B cell (primary cell): ENCODE measurements at regions of chr16 and their contacts with region 1.

Region 1: GRCh38 chr16:788394-789126 is at the start of gene CHTF18:
- DNase-seq: peak; percentile 94
- ATAC-seq: peak; percentile 97
- H3K4me3 ChIP-seq: peak within 1 kb of the TSS; percentile 15 to 86 (median 81)
- H3K4me3 Mint-ChIP-seq: peak within 1 kb of the TSS; percentile 86
- H3K27ac ChIP-seq: peak within 1 kb of the TSS in 1 of 2 donors; percentile 68
- H3K27ac Mint-ChIP-seq: peak within 1 kb of the TSS; percentile 76
- H3K4me1 ChIP-seq: peaks cover 13 to 24% of the 10 kb centered on the region in 2 donors
- H3K4me1 Mint-ChIP-seq: peaks cover 7% of the 10 kb centered on the region
- H3K27me3 ChIP-seq: no peaks in the 10 kb centered on the region
- H3K27me3 Mint-ChIP-seq: no peaks in the 10 kb centered on the region
- CTCF ChIP-seq: no peak
- total RNA-seq, gene CHTF18: 76.1 and 77.9 TPM in 2 replicates

Region 2: DNA sequence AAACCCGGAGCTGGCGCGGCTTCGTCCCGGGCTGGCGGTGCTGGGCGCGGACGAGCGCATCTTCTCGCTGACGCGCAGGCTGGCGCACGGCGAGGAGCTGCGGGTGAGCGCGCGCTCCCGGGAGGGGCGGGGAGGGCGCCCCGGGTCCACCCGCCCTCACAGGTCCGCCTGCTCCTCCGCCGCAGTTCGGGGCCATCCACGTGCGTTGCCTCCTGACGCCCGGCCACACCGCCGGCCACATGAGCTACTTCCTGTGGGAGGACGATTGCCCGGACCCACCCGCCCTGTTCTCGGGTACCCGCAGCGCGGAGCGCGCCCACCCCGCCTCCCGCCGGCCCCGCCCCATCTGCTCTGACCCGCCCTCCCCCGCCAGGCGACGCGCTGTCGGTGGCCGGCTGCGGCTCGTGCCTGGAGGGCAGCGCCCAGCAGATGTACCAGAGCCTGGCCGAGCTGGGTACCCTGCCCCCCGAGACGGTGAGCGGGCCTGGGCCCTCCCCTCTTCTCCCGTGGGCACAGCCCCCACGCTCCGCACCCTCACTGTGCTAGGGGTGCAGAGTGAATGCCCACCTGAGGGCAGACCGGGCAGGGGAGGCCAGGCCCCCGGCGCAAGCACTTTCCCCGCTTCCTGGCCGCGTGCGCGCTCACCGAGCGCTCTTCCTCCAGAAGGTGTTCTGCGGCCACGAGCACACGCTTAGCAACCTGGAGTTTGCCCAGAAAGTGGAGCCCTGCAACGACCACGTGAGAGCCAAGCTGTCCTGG is 60.2 kb before region 1 on chr16:
- CTCF ChIA-PET with region 1: interaction called, 4 read pairs
- POLR2A ChIA-PET with region 1: no interaction called
- intact Hi-C with region 1: loop called (anchors 1 kb)
- DNase-seq: peak; percentile 88
- ATAC-seq: peak; percentile 52
- H3K4me3 ChIP-seq: peak overlapping the region in 4 of 5 experiments; percentile 69 to 81 (median 74)
- H3K4me3 Mint-ChIP-seq: peak overlapping the region; percentile 73
- H3K27ac ChIP-seq: no peak overlapping the region
- H3K27ac Mint-ChIP-seq: peak overlapping the region; percentile 26
- H3K4me1 ChIP-seq: peaks cover 10 to 28% of the 10 kb centered on the region in 2 donors
- H3K4me1 Mint-ChIP-seq: peaks cover 16% of the 10 kb centered on the region
- H3K27me3 ChIP-seq: no peaks in the 10 kb centered on the region
- H3K27me3 Mint-ChIP-seq: no peaks in the 10 kb centered on the region
- CTCF ChIP-seq: no peak

Region 3: DNA sequence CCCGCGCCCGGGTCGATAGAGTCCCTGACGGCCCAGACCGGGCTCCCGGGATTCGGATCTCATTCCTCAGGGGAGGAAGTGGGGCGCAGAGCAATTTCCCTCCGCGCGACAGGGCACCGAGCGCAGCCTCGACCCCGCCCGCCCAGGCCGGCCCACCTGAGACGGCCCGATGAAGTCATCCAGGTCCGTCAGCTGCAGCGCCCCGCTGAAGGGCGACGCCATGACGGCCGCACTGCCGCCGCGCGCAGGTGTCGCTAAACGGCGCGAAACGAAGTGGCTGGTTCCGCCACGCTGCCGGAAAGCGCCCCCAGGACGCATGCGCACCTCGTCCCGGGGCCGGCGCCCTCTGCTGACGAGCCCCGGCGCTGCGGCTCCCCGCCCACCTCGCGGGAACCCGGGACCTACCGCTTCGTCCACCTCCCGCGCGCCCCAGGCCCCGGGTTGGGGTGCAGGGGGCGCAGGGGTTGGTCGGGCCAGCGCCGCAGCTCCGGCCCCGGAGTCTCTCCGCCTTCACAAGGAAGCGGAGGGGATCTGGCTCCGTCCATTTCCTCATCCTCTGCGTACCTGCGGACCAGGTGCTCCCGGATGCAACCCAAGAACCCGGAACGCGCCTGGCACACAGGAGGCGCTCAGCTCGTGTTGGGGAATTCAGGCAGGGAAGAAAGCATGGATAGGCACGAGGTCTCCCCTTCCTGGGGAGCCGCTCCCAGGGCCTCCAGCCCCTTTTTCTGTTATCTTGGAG is 47.6 kb before region 1 on chr16 and contains the start of gene CIAO3:
- CTCF ChIA-PET with region 1: interaction called, 6 read pairs
- POLR2A ChIA-PET with region 1: interaction called, 3 read pairs
- intact Hi-C with region 1: loop called (anchors 1 kb)
- DNase-seq: peak; percentile 95
- ATAC-seq: peak; percentile 88
- H3K4me3 ChIP-seq: peak within 1 kb of the TSS; percentile 21 to 94 (median 81)
- H3K4me3 Mint-ChIP-seq: peak within 1 kb of the TSS; percentile 82
- H3K27ac ChIP-seq: peak within 1 kb of the TSS; percentile 86 to 94
- H3K27ac Mint-ChIP-seq: peak within 1 kb of the TSS; percentile 83
- H3K4me1 ChIP-seq: peaks cover 20 to 36% of the 10 kb centered on the region in 2 donors
- H3K4me1 Mint-ChIP-seq: peaks cover 18% of the 10 kb centered on the region
- H3K27me3 ChIP-seq: no peaks in the 10 kb centered on the region
- H3K27me3 Mint-ChIP-seq: no peaks in the 10 kb centered on the region
- CTCF ChIP-seq: peak; percentile 97
- total RNA-seq, gene CIAO3: 59.4 and 67.6 TPM in 2 replicates

Region 4: DNA sequence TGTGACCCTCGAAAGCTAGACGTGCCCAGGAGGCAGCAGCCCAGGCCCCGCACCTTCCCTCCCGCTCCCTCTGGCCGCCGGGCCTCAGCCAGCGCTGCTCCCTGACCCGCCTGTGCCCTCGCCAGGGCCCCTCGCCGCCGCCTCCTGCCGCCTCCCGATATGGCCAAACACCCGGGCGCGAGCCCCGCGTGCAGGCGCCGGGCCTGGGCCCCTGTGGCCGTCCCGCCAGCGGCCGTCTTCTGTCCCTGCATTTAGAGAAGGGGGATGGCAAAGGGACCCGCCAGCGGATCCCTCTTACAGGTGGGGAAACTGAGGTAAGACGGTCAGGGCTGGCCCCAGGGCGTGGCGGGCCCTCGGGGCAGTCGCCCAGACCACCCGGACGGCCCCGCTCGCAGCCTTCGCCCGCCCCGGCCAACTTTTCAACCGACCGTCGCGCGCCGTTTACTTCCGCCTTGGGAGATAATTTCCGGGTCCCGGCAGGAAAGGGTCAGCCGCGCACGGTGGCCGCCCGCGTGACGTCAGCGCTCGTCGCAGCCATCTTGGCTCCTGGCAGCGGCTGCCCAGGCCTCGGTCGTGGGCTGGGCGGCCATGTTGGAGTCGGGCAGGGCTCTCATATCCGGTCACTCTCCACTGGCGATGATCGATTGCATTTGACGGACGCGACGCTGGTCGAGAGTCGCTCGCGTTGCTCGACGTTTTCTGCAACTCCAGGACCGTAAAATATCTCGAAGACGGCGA is 19.0 kb after region 1 on chr16:
- CTCF ChIA-PET with region 1: no interaction called
- POLR2A ChIA-PET with region 1: no interaction called
- intact Hi-C with region 1: loop called (anchors 1 kb)
- DNase-seq: peak; percentile 89
- ATAC-seq: peak; percentile 97
- H3K4me3 ChIP-seq: peak overlapping the region; percentile 68 to 82 (median 78)
- H3K4me3 Mint-ChIP-seq: peak overlapping the region; percentile 99
- H3K27ac ChIP-seq: peak overlapping the region; percentile 73 to 92
- H3K27ac Mint-ChIP-seq: peak overlapping the region; percentile 96
- H3K4me1 ChIP-seq: peaks cover 5 to 18% of the 10 kb centered on the region in 2 donors
- H3K4me1 Mint-ChIP-seq: peaks cover 8% of the 10 kb centered on the region
- H3K27me3 ChIP-seq: peaks cover 0 to 13% (median 0%) of the 10 kb centered on the region in 4 experiments
- H3K27me3 Mint-ChIP-seq: peaks cover 12% of the 10 kb centered on the region
- CTCF ChIP-seq: no peak